Head of caudate nucleus (tissue), 42 donors: ENCODE measurements at regions of chr17 and their contacts with region 1.

Region 1: GRCh38 chr17:63621766-63622519 is at the start of gene MAP3K3:
- DNase-seq: peak; percentile 96 to 100 (median 100)

Region 2: DNA sequence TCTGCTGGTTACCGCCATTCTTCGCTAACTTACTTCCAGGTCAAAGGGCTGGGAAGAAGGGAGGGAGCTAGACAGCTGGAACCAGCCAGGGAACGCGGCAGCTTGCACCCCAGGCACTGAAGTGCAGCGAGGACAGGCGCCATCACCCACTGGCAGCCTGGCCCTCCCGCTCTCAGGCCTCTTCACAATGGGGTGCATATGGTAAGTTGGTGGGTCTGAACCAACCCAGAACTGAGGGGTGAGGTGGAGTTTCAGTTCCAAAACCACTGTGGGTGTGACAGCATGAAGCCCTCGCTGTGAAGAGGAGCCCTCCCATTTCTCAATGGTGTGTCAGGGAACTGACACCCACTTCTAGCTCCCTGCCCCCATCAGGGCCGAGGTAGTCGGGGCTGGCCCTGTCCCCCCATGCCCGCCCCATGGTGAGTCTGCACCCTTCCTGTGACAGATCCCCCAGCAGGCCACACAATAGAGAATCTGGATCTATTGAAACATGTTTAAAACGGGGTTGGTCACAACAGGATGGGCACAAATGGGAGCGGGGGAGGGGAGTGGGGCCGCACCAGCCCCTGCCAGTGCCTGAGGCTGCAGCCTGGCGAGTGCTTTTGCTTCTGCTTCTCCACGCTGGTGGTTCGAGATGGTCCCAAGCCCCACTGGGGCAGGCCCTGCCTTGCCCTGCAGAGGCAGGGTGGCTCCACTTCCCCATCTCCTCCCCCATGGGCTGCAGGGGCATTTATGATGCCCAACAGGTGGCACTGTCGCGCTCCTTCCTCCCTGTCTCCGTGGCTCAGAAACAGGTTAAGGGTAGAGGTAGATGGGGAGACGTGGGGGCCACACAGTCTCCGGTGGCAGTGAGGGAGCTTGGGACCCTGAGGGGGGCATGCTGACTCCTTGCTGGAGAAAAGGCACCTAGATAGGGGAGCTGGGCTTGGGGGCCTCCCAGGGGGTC is 75.7 kb after region 1 on chr17:
- intact Hi-C with region 1: loop called (anchors 10 kb)
- DNase-seq: peak in 22 of 42 donors; percentile 32 to 62 (median 46)

Region 3: DNA sequence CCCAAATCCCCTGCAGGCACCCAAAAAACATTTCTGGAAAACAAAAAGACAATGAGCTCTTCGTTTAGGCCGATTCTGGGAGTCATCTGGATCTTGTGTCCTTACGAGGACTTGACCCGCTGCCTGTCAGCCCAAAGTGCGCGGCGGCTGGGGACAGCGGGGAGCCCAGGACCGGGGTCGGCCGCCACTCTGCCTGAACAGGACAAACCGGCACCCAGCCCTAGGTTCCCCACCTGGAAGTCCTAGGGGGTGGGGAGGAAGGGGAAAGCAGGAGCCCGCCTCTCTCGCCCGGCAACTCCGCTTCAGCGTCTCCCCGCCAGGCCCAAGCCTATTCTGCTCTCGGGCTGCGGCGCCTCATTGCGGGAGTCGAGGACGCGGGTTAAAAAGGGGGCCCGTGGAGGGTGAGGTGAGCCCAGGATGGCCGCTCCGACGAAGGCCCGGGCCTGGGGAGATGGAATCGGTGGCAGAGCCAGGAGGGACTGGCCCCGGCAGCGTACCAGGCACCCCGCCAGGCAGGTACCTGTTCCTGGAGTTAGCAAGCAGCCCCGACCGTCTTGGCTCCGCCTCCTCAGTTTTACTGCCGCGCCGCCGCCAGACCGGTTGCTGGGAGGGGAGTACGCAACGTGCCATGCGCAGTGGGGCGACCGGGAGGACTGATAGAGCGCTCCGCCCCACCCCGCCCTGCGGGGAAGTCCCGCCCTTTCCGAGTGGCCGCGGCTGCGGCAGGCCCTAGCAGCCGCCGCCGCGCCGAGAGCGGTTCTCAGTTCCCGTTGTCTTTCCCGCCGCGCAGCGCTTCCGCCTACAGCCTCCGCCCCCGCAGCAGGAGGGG is 119.5 kb after region 1 on chr17 and contains the start of gene STRADA:
- intact Hi-C with region 1: loop called (anchors 10 kb)
- DNase-seq: peak; percentile 93 to 99 (median 98)